ENCODE measurements at regions of chr9 and their contacts with region 1.

Region 1: DNA sequence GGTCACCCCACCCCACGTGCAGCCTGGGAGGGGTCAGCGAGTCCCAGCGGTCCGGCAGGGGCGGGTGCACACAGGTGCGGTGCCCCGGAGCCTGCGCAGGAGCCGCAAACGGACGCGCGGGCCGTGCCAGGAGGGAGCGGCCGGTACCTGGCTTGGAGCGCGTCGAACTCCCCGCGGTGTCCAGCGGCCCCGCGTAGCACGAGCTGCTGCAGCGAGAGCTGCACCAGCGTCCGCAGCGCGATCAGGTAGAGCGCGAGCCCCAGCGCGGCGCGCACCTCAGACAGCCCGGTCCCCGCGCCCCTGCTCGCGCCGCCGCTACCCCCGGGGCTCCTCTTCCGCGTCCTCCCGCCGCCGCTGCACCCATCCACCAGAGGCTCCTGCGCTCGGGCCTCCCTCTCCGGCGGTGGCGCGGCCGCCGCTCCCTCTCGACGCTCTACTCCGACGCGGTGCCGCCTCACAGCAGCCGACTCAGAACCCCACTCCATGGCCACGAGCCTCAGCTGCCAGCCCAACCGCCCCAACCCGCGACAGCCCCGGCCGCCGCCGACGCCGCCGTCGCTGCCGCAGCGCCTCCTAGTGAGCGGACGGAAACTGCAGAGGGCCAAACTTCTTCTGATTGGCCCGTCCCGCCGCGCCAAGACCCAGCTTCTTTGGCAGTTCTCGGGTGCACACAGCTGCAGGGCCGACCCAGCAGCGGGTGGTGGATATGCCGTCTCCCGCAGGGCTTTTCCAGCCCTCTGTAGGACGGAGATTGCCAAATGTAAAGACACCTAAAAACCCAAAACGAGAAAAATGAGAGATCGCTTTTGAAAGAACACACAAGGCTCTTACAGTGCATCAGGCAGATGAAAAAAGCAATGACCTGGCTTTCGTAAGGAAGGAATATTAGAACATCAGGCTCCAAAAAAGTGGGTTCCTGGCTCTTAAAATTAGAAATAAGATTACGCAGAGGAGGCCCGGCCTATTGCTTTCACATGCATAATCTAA is at the start of gene ERMP1:
- DNase-seq: peak; percentile 85 to 95 (median 92)
- ATAC-seq: peak; percentile 87
- H3K4me3 ChIP-seq: peak within 1 kb of the TSS; percentile 57 to 91
- H3K4me3 Mint-ChIP-seq: peak within 1 kb of the TSS; percentile 96
- H3K27ac ChIP-seq: peak within 1 kb of the TSS in 1 of 2 experiments; percentile 41
- H3K27ac Mint-ChIP-seq: peak within 1 kb of the TSS; percentile 88
- H3K4me1 ChIP-seq: peaks cover 34% of the 10 kb centered on the region
- H3K4me1 Mint-ChIP-seq: peaks cover 66% of the 10 kb centered on the region
- H3K27me3 ChIP-seq: no peaks in the 10 kb centered on the region
- H3K27me3 Mint-ChIP-seq: no peaks in the 10 kb centered on the region
- CTCF ChIP-seq: peak; percentile 83
- total RNA-seq, gene ERMP1: 5.2 to 7.9 TPM

Region 2: DNA sequence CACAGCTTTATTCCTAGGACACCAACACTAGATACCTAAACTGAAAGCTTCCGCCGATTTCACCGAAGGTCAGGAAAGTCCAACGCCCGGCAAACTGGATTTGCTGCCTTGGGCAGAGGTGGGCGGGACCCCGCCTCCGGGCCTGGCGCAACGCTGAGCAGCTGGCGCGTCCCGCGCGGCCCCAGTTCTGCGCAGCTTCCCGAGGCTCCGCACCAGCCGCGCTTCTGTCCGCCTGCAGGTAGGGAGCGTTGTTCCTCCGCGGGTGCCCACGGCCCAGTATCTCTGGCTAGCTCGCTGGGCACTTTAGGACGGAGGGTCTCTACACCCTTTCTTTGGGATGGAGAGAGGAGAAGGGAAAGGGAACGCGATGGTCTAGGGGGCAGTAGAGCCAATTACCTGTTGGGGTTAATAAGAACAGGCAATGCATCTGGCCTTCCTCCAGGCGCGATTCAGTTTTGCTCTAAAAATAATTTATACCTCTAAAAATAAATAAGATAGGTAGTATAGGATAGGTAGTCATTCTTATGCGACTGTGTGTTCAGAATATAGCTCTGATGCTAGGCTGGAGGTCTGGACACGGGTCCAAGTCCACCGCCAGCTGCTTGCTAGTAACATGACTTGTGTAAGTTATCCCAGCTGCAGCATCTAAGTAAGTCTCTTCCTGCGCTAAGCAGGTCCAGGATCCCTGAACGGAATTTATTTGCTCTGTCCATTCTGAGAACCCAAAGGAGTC is 382.3 kb before region 1 on chr9 and contains the start of gene CD274:
- CTCF ChIA-PET with region 1: no interaction called
- POLR2A ChIA-PET with region 1: no interaction called
- intact Hi-C with region 1: loop called (anchors 5 kb)
- DNase-seq: peak; percentile 53 to 92 (median 74)
- ATAC-seq: peak; percentile 93
- H3K4me3 ChIP-seq: peak within 1 kb of the TSS; percentile 60 to 91
- H3K4me3 Mint-ChIP-seq: peak within 1 kb of the TSS; percentile 88
- H3K27ac ChIP-seq: peak within 1 kb of the TSS; percentile 94 to 96
- H3K27ac Mint-ChIP-seq: peak within 1 kb of the TSS; percentile 95
- H3K4me1 ChIP-seq: peaks cover 17% of the 10 kb centered on the region
- H3K4me1 Mint-ChIP-seq: peaks cover 51% of the 10 kb centered on the region
- H3K27me3 ChIP-seq: no peaks in the 10 kb centered on the region
- H3K27me3 Mint-ChIP-seq: no peaks in the 10 kb centered on the region
- CTCF ChIP-seq: peak; percentile 55
- total RNA-seq, gene CD274: 3.4 to 3.7 TPM

Region 3: GRCh38 chr9:5799314-5799713 is 33.5 kb before region 1 on chr9:
- CTCF ChIA-PET with region 1: interaction called, 10 read pairs
- POLR2A ChIA-PET with region 1: interaction called, 5 read pairs
- intact Hi-C with region 1: loop called in 1 of 2 experiments (anchors 2 kb)
- DNase-seq: peak in 2 of 9 experiments; percentile 29 to 46
- ATAC-seq: no peak
- H3K4me3 ChIP-seq: no peak overlapping the region
- H3K4me3 Mint-ChIP-seq: no peak overlapping the region
- H3K27ac ChIP-seq: no peak overlapping the region
- H3K27ac Mint-ChIP-seq: no peak overlapping the region
- H3K4me1 ChIP-seq: peaks cover under 1% of the 10 kb centered on the region
- H3K4me1 Mint-ChIP-seq: peaks cover 28% of the 10 kb centered on the region
- H3K27me3 ChIP-seq: no peaks in the 10 kb centered on the region
- H3K27me3 Mint-ChIP-seq: no peaks in the 10 kb centered on the region
- CTCF ChIP-seq: no peak

Region 4: GRCh38 chr9:5843794-5844504 is 11.1 kb after region 1 on chr9:
- CTCF ChIA-PET with region 1: interaction called, 10 read pairs
- POLR2A ChIA-PET with region 1: interaction called, 30 read pairs
- intact Hi-C with region 1: loop called (anchors 1 kb)
- DNase-seq: peak in 1 of 9 experiments; percentile 35
- ATAC-seq: no peak
- H3K4me3 ChIP-seq: peak overlapping the region in 1 of 2 experiments; percentile 24
- H3K4me3 Mint-ChIP-seq: peak overlapping the region; percentile 65
- H3K27ac ChIP-seq: peak overlapping the region in 1 of 2 experiments; percentile 61
- H3K27ac Mint-ChIP-seq: peak overlapping the region; percentile 84
- H3K4me1 ChIP-seq: peaks cover 53% of the 10 kb centered on the region
- H3K4me1 Mint-ChIP-seq: peaks cover 63% of the 10 kb centered on the region
- H3K27me3 ChIP-seq: no peaks in the 10 kb centered on the region
- H3K27me3 Mint-ChIP-seq: no peaks in the 10 kb centered on the region
- CTCF ChIP-seq: no peak

Region 5: GRCh38 chr9:5869315-5870019 is 36.6 kb after region 1 on chr9:
- CTCF ChIA-PET with region 1: interaction called, 15 read pairs
- POLR2A ChIA-PET with region 1: interaction called, 3 read pairs
- intact Hi-C with region 1: loop called in 1 of 2 experiments (anchors 5 kb)
- DNase-seq: peak in 2 of 9 experiments; percentile 23 to 30
- ATAC-seq: no peak
- H3K4me3 ChIP-seq: no peak overlapping the region
- H3K4me3 Mint-ChIP-seq: no peak overlapping the region
- H3K27ac ChIP-seq: no peak overlapping the region
- H3K27ac Mint-ChIP-seq: no peak overlapping the region
- H3K4me1 ChIP-seq: no peaks in the 10 kb centered on the region
- H3K4me1 Mint-ChIP-seq: peaks cover 13% of the 10 kb centered on the region
- H3K27me3 ChIP-seq: no peaks in the 10 kb centered on the region
- H3K27me3 Mint-ChIP-seq: no peaks in the 10 kb centered on the region
- CTCF ChIP-seq: no peak